Cardiac septum (tissue), 1 donor: ENCODE measurements at regions of chr9 and their contacts with region 1.

Region 1: GRCh38 chr9:15277400-15278090 is 29.5 kb downstream of the TTC39B start:
- DNase-seq: no peak

Region 2: DNA sequence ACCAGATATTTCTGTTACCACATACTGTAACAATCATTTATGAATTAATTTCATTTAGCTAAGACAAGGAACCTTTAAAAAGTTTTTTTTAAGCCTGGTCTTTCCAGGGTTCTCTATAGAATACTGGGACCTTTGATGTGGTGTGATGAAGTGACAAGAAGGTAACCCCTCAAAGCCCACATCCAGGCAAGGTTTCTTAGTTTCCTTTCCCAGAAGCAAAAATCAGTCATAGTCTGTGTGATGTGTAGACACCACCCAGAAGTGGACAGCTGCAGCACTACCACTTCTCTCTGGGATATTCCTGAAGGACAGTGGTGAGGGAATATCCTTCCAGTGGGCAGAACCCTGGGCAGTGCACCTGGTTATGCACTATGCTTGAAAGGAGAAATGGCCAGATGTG is 86.2 kb before region 1 on chr9:
- intact Hi-C with region 1: no loop called
- DNase-seq: no peak

Region 3: GRCh38 chr9:15612962-15613361 is 335.4 kb after region 1 on chr9:
- intact Hi-C with region 1: loop called (anchors 5 kb)
- DNase-seq: no peak